Astrocyte of the cerebellum (primary cell): ENCODE measurements at regions of chr9 and their contacts with region 1.

Region 1: GRCh38 chr9:136885950-136886578 is at the start of gene TRAF2:
- DNase-seq: peak; percentile 97
- H3K4me3 ChIP-seq: peak within 1 kb of the TSS; percentile 82
- CTCF ChIP-seq: no peak

Region 2: GRCh38 chr9:136814725-136815421 is 71.2 kb before region 1 on chr9:
- in situ Hi-C with region 1: loop called (anchors 10 kb)
- DNase-seq: no peak
- H3K4me3 ChIP-seq: no peak overlapping the region
- CTCF ChIP-seq: no peak

Region 3: GRCh38 chr9:136849038-136849959 is 36.8 kb before region 1 on chr9 and contains the start of gene PHPT1:
- in situ Hi-C with region 1: no loop called
- DNase-seq: peak; percentile 98
- H3K4me3 ChIP-seq: peak within 1 kb of the TSS; percentile 70
- CTCF ChIP-seq: no peak